Caco-2 (cell line): ENCODE measurements at regions of chr5 and their contacts with region 1.

Region 1: DNA sequence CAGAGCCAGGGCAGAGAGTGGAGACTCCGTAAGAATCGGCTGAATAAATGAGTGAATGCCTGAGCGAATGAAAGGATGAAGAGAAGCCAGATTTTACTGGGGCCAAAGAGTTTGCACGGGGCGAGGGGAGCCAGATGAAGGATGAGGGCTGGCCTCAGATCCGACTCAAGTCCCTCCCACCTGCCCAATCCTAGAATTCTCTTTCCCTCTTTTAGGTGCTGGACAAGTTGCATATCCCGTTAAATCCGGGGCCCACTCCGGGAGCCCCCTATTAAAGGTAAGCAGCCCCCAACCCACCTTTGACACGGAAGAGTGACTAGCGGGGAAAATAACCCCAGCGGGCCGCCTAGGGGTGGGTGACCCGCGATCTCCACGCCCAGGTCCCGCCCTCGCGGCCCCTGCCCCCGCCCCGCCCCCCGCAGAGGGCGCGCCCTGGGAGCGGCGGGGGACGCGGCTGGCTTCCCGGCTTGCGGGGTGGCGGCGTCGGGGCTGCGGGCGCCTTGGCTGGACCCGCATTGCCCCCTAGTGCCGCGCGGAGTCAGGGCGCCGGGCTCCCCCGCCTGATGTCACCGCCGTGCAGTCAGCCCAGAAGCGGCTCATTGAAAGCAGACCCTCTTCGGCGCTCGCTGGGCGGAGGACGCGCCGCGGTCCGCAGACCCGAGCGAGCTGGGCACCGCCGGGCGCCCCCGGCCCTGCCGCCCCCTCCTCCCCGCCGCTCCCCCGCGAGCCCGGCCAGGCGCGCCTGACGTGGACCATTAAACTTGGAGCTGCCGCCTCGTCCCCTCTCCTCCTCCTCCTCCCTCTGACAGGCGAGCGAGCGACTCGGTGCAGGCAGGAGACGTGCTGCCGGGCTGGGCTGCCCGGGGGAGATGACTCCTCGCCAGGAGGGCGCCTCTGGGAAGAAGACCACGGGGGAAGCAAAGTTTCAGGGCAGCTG is at the start of gene ADRA1B:
- DNase-seq: peak; percentile 53 to 71
- H3K4me3 ChIP-seq: peak within 1 kb of the TSS; percentile 30
- H3K4me3 Mint-ChIP-seq: peak within 1 kb of the TSS; percentile 63
- H3K27ac Mint-ChIP-seq: no peak within 1 kb of the TSS
- H3K4me1 ChIP-seq: no peaks in the 10 kb centered on the region
- H3K4me1 Mint-ChIP-seq: no peaks in the 10 kb centered on the region
- H3K27me3 ChIP-seq: peaks cover 1% of the 10 kb centered on the region; the same call in 1 of the 2 replicates
- H3K27me3 Mint-ChIP-seq: peaks cover 34% of the 10 kb centered on the region
- CTCF ChIP-seq: peak; percentile 23 to 50
- total RNA-seq, gene ADRA1B: not detected in 2 replicates

Region 2: DNA sequence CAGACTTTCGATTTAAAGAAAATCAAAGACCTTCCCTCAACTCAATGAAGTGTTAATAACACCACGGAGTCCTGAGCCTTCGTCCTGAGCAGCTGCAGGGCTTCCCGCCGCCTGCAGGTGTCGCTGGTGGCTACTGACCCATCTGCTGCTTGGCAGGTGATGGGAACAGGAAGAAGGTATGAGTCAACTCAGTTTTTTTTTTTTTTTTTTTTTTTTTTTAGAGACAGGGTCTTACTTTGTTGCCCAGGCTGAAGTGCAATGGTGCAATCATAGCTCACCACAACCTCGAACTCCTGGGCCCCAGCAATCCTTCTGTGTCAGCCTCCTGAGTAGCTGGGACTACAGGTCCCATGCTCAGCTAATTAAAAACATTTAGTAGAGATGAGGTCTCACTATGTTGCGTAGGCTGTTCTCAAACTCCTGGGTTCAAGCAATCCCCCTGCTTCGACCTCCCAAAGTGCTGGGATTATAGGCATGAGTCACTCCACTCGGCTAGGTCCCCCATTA is 400.2 kb before region 1 on chr5:
- CTCF ChIA-PET with region 1: no interaction called
- POLR2A ChIA-PET with region 1: no interaction called
- intact Hi-C with region 1: loop called (anchors 1 kb)
- DNase-seq: peak; percentile 59 to 71
- H3K4me3 ChIP-seq: no peak overlapping the region
- H3K4me3 Mint-ChIP-seq: no peak overlapping the region
- H3K27ac Mint-ChIP-seq: no peak overlapping the region
- H3K4me1 ChIP-seq: peaks cover 1% of the 10 kb centered on the region; the same call in 1 of the 2 replicates
- H3K4me1 Mint-ChIP-seq: no peaks in the 10 kb centered on the region
- H3K27me3 ChIP-seq: no peaks in the 10 kb centered on the region; the same call in 1 of the 2 replicates
- H3K27me3 Mint-ChIP-seq: peaks cover 4% of the 10 kb centered on the region
- CTCF ChIP-seq: peak; percentile 73 to 89

Region 3: DNA sequence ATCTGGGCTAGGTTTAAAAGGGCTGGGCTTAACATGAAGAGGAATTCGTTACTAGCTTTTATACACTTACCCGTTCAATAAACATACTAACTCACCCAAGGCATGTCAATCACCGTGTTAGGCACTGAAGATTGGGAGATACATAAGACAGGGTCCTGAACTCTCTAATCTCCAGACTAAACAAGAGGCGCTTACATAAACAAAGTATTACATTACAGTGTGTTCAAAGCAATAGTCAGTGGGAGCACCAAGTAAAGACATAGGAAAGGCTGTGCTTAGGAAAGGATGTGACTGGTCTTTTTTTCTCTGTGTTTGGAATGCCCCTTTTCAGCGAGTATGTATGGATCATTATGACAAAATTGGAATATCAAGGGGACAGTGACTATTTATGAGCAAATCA is 203.5 kb before region 1 on chr5:
- CTCF ChIA-PET with region 1: no interaction called
- POLR2A ChIA-PET with region 1: no interaction called
- intact Hi-C with region 1: no loop called
- DNase-seq: no peak
- H3K4me3 ChIP-seq: no peak overlapping the region
- H3K4me3 Mint-ChIP-seq: no peak overlapping the region
- H3K27ac Mint-ChIP-seq: no peak overlapping the region
- H3K4me1 ChIP-seq: no peaks in the 10 kb centered on the region
- H3K4me1 Mint-ChIP-seq: no peaks in the 10 kb centered on the region
- H3K27me3 ChIP-seq: no peaks in the 10 kb centered on the region
- H3K27me3 Mint-ChIP-seq: peaks cover 31% of the 10 kb centered on the region
- CTCF ChIP-seq: no peak

Region 4: DNA sequence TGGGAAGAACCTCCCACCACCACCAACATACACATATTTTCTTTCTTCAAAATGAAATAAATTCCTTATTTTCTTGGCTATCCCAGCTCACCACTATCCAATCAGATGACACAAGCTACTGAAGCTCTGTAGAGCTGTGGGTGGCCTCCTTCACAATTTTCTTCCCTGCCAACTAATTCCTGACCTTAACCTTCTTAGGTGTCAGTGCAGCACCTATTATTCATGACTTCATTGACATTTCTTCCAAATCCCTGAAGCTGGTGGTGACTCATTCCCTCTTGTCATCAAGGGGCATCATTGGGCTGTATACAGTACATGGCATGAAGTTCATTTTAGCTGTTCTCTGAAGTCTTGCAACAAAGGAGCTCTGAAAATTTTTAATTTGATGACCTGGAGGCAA is 41.9 kb before region 1 on chr5:
- CTCF ChIA-PET with region 1: no interaction called
- POLR2A ChIA-PET with region 1: no interaction called
- intact Hi-C with region 1: no loop called
- DNase-seq: no peak
- H3K4me3 ChIP-seq: no peak overlapping the region
- H3K4me3 Mint-ChIP-seq: no peak overlapping the region
- H3K27ac Mint-ChIP-seq: no peak overlapping the region
- H3K4me1 ChIP-seq: no peaks in the 10 kb centered on the region; the same call in 1 of the 2 replicates
- H3K4me1 Mint-ChIP-seq: peaks cover 6% of the 10 kb centered on the region
- H3K27me3 ChIP-seq: no peaks in the 10 kb centered on the region; the same call in 1 of the 2 replicates
- H3K27me3 Mint-ChIP-seq: peaks cover 19% of the 10 kb centered on the region
- CTCF ChIP-seq: no peak